Activated CD4-positive, alpha-beta T cell treated with anti-CD3 and anti-CD28 coated beads for 36 hours (primary cell): ENCODE measurements at regions of chr14 and their contacts with region 1.

Region 1: GRCh38 chr14:61461808-61462275 is 140.5 kb downstream of the PRKCH start:
- DNase-seq: peak; percentile 51
- ATAC-seq: peak; percentile 45
- H3K4me3 Mint-ChIP-seq: no peak overlapping the region
- H3K27ac Mint-ChIP-seq: peak overlapping the region; percentile 92
- H3K4me1 Mint-ChIP-seq: peaks cover 77% of the 10 kb centered on the region
- H3K27me3 Mint-ChIP-seq: no peaks in the 10 kb centered on the region

Region 2: GRCh38 chr14:61269321-61270083 is 192.3 kb before region 1 on chr14:
- CTCF ChIA-PET with region 1: interaction called, 3 read pairs
- POLR2A ChIA-PET with region 1: no interaction called
- intact Hi-C with region 1: loop called in 1 of 2 experiments (anchors 1 kb)
- DNase-seq: peak; percentile 85
- ATAC-seq: peak; percentile 95
- H3K4me3 Mint-ChIP-seq: peak overlapping the region; percentile 48
- H3K27ac Mint-ChIP-seq: no peak overlapping the region
- H3K4me1 Mint-ChIP-seq: peaks cover 2% of the 10 kb centered on the region
- H3K27me3 Mint-ChIP-seq: peaks cover 30% of the 10 kb centered on the region

Region 3: GRCh38 chr14:61710853-61711817 is 249.3 kb after region 1 on chr14:
- CTCF ChIA-PET with region 1: interaction called, 3 read pairs
- POLR2A ChIA-PET with region 1: no interaction called
- intact Hi-C with region 1: loop called in 1 of 2 experiments (anchors 5 kb)
- DNase-seq: no peak
- ATAC-seq: peak; percentile 27
- H3K4me3 Mint-ChIP-seq: peak overlapping the region; percentile 39
- H3K27ac Mint-ChIP-seq: peak overlapping the region; percentile 53
- H3K4me1 Mint-ChIP-seq: peaks cover 89% of the 10 kb centered on the region
- H3K27me3 Mint-ChIP-seq: no peaks in the 10 kb centered on the region

Region 4: DNA sequence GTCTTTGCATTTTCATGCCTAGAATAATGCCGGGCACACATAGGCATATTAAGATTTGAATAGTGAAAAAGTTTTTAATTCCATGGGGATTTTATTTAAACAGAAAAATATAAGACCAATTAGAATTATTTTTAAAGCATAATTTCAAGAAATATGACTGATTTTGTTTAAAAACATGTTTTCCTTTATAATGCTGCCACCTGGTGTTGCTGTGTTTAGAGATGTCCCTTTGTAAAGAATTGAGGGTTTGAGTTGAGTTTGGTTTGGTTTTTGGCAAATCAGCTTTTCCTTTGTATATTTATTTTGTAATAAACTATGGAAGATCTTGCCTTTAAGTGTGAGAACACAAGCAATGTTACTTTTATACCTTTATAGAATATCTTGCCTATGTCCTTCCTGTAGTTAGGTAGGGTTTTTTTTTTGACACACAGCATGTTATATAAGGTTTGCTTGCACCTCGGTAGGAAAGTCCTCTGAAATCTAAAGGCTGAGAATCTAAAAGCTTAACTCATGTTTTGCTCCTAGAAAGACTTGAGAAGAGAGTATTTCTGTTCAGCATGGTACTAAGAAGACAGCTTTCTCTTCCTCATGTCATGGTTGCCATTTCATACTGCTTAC is 269.0 kb after region 1 on chr14:
- CTCF ChIA-PET with region 1: interaction called, 11 read pairs
- POLR2A ChIA-PET with region 1: interaction called, 3 read pairs
- intact Hi-C with region 1: loop called (anchors 1 kb)
- DNase-seq: no peak
- ATAC-seq: no peak
- H3K4me3 Mint-ChIP-seq: no peak overlapping the region
- H3K27ac Mint-ChIP-seq: peak overlapping the region; percentile 48
- H3K4me1 Mint-ChIP-seq: peaks cover 43% of the 10 kb centered on the region
- H3K27me3 Mint-ChIP-seq: no peaks in the 10 kb centered on the region

Region 5: DNA sequence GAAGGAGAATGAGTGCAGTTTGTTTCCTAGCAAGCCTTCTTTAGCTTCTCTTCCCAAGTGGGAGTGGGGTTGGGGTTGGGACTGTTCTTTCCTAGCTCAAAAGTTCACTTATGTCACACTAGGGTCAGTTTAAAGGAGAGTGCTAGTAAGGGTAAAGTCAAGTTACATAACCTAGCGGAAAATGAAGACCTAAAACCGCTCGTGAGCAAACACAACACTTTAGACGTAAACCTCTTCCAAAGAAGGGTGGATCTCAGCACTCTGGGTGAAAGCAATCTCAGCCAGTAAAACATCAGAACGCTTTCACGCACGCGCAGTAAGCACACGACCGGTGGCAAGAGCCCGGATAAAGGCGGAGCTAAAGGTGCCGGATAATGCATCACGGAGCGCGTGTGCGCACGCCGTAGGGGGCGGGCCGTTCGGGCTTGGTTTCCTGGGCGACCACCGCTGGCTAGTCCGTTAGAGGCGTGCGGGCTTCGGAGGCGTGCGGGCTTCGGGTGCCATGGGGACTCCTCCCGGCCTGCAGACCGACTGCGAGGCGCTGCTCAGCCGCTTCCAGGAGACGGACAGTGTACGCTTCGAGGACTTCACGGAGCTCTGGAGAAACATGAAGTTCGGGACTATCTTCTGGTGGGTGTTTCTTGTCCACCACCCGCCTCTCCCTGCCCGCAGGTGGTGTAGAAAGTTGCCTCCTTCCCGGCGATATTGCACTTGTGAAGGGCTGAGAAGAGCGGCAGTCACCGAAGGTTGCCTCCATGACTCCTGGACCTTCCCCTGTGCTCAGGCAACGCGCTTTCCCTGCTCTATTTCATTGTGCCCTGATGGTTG is 300.3 kb after region 1 on chr14 and contains the start of gene SNAPC1:
- CTCF ChIA-PET with region 1: no interaction called
- POLR2A ChIA-PET with region 1: no interaction called
- intact Hi-C with region 1: loop called in 1 of 2 experiments (anchors 1 kb)
- DNase-seq: peak; percentile 98
- ATAC-seq: peak; percentile 98
- H3K4me3 Mint-ChIP-seq: peak within 1 kb of the TSS; percentile 95
- H3K27ac Mint-ChIP-seq: peak within 1 kb of the TSS; percentile 96
- H3K4me1 Mint-ChIP-seq: peaks cover 35% of the 10 kb centered on the region
- H3K27me3 Mint-ChIP-seq: no peaks in the 10 kb centered on the region
- total RNA-seq, gene SNAPC1: 10.5 to 11.2 TPM

Region 6: DNA sequence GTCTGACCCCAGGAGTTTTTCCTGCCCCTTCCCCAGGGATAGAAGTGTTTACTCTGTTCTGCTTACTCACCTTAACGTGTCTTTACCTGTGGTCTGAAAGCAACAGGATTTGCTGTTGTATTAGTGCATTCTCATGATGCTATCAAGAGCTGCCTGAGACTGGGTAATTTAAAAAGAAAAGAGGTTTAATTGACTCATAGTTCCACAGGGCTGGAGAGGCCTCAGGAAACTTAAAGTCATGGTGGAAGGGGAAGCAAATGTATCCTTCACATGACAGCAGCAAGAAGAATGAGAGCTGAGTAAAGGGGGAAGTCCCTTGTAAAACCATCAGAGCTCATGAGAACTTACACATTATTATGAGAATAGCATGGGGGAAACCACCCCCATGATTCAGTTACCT is 540.8 kb after region 1 on chr14:
- CTCF ChIA-PET with region 1: no interaction called
- POLR2A ChIA-PET with region 1: no interaction called
- intact Hi-C with region 1: loop called in 1 of 2 experiments (anchors 5 kb)
- DNase-seq: peak; percentile 45
- ATAC-seq: peak; percentile 97
- H3K4me3 Mint-ChIP-seq: no peak overlapping the region
- H3K27ac Mint-ChIP-seq: peak overlapping the region; percentile 40
- H3K4me1 Mint-ChIP-seq: peaks cover 16% of the 10 kb centered on the region
- H3K27me3 Mint-ChIP-seq: peaks cover 14% of the 10 kb centered on the region